Endothelial cell of umbilical vein (primary cell): ENCODE measurements at regions of chr4 and their contacts with region 1.

Region 1: DNA sequence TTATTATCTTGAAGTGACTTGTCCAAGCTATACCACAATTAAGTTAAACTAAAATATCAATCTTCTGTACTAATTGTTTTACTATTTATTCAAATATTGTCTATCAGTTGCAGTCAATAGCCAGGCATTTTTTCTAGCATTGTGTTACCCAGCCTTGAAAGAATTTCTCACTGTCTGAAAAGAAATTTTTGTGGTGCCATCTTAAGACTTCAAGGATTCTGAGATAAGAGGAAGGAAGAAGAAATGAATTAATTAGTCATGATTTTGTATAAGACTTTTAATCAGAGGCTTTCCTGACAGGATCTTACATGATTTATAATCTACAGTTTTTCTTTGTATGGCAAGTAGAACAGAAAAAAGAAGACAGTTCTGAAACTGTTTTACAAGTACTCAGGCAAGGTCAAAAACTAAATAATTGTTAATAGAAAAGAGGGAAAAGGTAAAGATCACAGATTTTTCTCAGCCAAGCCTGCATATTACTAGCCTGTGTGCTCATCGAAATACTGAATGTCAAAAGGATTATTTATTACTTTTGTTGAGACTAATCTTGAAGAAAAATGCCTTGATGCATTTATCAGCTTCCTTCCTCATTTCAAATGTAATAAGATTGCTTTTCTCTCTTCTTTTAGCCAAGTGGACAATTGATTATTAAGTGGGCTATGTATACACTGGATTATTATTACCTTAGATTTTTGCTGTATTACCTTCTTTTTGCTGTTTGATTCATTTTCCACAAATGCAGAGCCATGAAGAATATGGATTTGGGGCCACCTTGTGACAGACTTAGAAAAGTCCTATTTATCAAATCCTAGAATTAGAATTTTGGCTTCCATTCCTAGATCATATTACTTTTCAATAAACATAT is 53.8 kb downstream of the CXCL1 start:
- DNase-seq: peak; percentile 76
- H3K4me3 ChIP-seq: no peak overlapping the region
- H3K27ac ChIP-seq: no peak overlapping the region
- H3K4me1 ChIP-seq: peaks cover 10% of the 10 kb centered on the region
- H3K27me3 ChIP-seq: no peaks in the 10 kb centered on the region
- CTCF ChIP-seq: peak; percentile 9 to 14
- POLR2A ChIP-seq: no peak

Region 2: GRCh38 chr4:73308286-73308685 is 614.7 kb before region 1 on chr4:
- CTCF ChIA-PET with region 1: no interaction called
- POLR2A ChIA-PET with region 1: no interaction called
- dilution Hi-C with region 1: no loop called
- intact Hi-C with region 1: loop called (anchors 2 kb)
- DNase-seq: peak; percentile 20
- H3K4me3 ChIP-seq: no peak overlapping the region
- H3K27ac ChIP-seq: no peak overlapping the region
- H3K4me1 ChIP-seq: peaks cover 2% of the 10 kb centered on the region
- H3K27me3 ChIP-seq: peaks cover 0 to 2% of the 10 kb centered on the region in 2 experiments
- CTCF ChIP-seq: no peak
- POLR2A ChIP-seq: no peak

Region 3: DNA sequence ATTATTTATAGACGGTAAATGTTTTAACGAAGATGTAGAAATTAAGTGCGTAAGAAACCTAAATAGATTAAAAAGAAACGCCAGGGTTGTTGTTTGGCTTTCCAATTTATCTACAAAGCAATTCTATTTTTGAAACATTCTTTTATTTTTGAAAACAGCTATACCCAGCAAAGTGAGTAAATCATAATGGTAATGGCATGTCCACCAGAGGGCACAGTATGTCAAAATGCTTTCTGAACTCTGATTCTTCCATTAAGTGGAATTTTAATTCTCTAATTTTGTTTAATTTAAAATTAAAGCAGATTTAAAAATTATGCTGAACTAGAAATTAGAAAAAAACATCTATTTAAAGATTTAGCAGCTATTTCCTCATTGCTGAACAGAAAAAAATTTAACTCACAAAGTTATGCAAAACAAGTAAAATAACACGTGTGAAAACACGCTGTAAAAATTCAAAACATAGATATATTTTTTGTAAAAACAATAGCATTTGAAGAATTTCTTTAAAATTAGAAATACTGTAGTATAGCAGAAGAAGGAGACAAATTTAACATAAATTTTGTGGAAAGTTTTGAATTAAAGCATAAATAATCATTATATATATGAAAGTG is 329.3 kb before region 1 on chr4:
- CTCF ChIA-PET with region 1: interaction called, 15 read pairs
- POLR2A ChIA-PET with region 1: no interaction called
- dilution Hi-C with region 1: no loop called
- intact Hi-C with region 1: loop called (anchors 1 kb)
- DNase-seq: peak; percentile 55
- H3K4me3 ChIP-seq: no peak overlapping the region
- H3K27ac ChIP-seq: no peak overlapping the region
- H3K4me1 ChIP-seq: no peaks in the 10 kb centered on the region
- H3K27me3 ChIP-seq: no peaks in the 10 kb centered on the region
- CTCF ChIP-seq: peak; percentile 33 to 42
- POLR2A ChIP-seq: no peak

Region 4: GRCh38 chr4:73869130-73870050 is 53.6 kb before region 1 on chr4 and contains the start of gene CXCL1:
- CTCF ChIA-PET with region 1: interaction called, 4 read pairs
- POLR2A ChIA-PET with region 1: no interaction called
- dilution Hi-C with region 1: no loop called
- intact Hi-C with region 1: loop called (anchors 2 kb)
- DNase-seq: peak; percentile 52
- H3K4me3 ChIP-seq: peak within 1 kb of the TSS; percentile 49 to 81 (median 67)
- H3K27ac ChIP-seq: peak within 1 kb of the TSS; percentile 55
- H3K4me1 ChIP-seq: peaks cover 35% of the 10 kb centered on the region
- H3K27me3 ChIP-seq: no peaks in the 10 kb centered on the region
- CTCF ChIP-seq: no peak
- POLR2A ChIP-seq: peak; percentile 68
- total RNA-seq, gene CXCL1: 9.0 and 20.0 TPM in 2 replicates